Cardiac septum (tissue), 1 donor: ENCODE measurements at regions of chr9 and their contacts with region 1.

Region 1: DNA sequence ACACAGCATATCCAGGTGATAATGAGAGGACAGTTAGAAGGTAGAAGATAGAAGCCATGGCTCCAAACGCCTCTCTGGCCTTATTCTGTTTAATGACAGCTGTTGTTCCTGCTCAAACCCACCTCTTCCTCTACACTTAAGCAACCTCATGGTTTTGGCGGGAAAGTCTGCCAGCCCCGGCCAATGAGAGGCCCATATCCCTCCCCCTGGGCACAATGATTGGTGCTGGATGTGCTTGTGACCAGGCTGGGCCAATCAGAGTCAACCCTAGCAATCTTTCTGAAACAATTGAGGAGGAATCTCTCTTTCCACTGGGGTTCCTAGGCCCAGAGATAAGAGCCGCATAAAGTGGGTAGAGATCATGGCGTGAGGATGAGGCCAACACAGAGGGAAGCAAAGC is 4.8 kb upstream of the GFI1B start:
- DNase-seq: no peak

Region 2: GRCh38 chr9:132901856-132902831 is 71.6 kb before region 1 on chr9:
- intact Hi-C with region 1: loop called (anchors 10 kb)
- DNase-seq: no peak